ENCODE measurements at regions of chr3 and their contacts with region 1.

Region 1: GRCh38 chr3:141894524-141895178 is 18.2 kb downstream of the ATP1B3 start:
- DNase-seq: no peak
- H3K4me3 Mint-ChIP-seq: no peak overlapping the region
- H3K27ac Mint-ChIP-seq: no peak overlapping the region
- H3K4me1 Mint-ChIP-seq: peaks cover 18% of the 10 kb centered on the region
- H3K27me3 Mint-ChIP-seq: no peaks in the 10 kb centered on the region

Region 2: GRCh38 chr3:141812084-141812483 is 82.6 kb before region 1 on chr3:
- CTCF ChIA-PET with region 1: no interaction called
- DNase-seq: no peak
- H3K4me3 Mint-ChIP-seq: no peak overlapping the region
- H3K27ac Mint-ChIP-seq: no peak overlapping the region
- H3K4me1 Mint-ChIP-seq: no peaks in the 10 kb centered on the region
- H3K27me3 Mint-ChIP-seq: peaks cover 23% of the 10 kb centered on the region

Region 3: DNA sequence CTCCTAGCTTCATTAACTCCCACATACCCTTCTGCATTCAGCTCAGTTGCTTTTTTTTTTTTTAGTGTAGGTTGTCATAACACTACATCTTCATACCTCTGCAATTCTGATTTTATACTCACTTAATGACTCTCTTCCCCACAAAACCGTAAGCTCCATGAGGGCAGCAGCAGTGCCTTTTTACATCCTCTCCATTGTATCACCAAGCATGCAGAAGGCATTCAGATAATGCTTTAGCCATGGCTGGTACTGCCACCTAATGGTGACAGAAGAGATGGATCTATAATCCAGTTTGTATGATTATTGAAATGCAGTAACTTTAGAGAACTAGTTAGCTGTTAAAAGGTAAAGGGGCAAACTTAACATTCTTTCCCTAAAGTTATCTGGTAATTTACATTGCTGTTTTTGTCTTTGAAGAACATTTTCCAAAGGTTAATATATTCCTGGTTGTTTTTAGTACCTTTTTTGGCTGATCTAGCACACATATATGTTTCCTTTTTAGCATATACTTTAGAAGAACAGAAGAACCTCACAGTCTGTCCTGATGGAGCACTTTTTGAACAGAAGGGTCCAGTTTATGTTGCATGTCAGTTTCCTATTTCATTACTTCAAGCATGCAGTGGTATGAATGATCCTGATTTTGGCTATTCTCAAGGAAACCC is 18.6 kb after region 1 on chr3:
- CTCF ChIA-PET with region 1: interaction called, 10 read pairs
- DNase-seq: peak; percentile 70
- H3K4me3 Mint-ChIP-seq: no peak overlapping the region
- H3K27ac Mint-ChIP-seq: no peak overlapping the region
- H3K4me1 Mint-ChIP-seq: peaks cover 2% of the 10 kb centered on the region
- H3K27me3 Mint-ChIP-seq: no peaks in the 10 kb centered on the region

Region 4: DNA sequence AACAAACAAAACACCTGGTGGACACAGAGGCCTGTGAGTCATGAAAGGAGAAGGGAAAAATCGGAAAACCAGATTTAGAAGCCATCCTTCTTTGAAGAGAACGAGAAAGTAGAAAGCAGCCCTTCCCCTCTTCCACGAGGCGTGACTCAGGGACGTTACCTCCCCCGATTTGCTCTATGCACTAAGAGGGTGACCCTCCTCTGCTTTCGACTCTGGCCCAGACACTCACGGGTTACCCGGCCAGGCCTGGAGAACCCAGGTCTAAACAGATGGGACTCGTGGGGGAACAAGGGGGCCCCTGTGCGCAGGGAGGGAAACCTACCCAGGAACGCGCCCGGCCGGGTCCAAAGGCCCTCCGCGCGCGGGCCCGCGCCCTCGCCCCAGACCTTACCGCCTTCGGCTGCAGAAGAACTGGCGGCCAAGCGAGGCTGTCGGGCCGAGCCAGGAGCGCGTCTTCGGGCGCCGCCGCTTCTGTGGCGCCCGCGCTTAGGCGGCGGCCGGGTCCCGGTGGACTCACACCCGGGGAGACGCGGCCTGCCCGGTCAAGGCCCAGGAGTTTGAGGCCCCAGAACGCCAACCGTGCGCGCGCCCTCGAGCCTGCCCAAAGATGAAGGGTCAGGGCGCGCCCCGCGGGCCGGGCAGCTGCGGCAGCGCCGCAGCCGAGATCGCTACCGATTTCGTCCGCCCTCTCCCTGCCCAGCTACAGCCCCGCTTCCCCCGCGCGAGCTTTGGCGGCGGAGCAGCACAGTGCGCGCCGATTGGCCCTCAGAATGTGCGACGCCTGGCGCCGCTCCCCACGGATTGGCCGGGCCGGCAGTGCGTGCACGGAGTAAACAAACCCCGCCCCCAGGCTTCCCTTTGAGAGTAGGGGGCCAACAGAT is 254.4 kb after region 1 on chr3 and contains the start of gene TFDP2:
- CTCF ChIA-PET with region 1: no interaction called
- DNase-seq: peak; percentile 93
- H3K4me3 Mint-ChIP-seq: peak within 1 kb of the TSS; percentile 84
- H3K27ac Mint-ChIP-seq: peak within 1 kb of the TSS; percentile 84
- H3K4me1 Mint-ChIP-seq: peaks cover 24% of the 10 kb centered on the region
- H3K27me3 Mint-ChIP-seq: peaks cover 12% of the 10 kb centered on the region

Measured in activated naive CD4-positive, alpha-beta T cell treated with anti-CD3 and anti-CD28 coated beads, Interleukin-2, amount 10 ng/mL, durations not matched to agents 7 days and 5 days (primary cell).